ENCODE measurements at regions of chr19 and their contacts with region 1.

Region 1: GRCh38 chr19:11814029-11814699 is at the start of gene ZNF440:
- DNase-seq: peak; percentile 65 to 88 (median 73)
- ATAC-seq: peak; percentile 99
- H3K4me3 ChIP-seq: peak within 1 kb of the TSS; percentile 94
- H3K4me3 Mint-ChIP-seq: peak within 1 kb of the TSS; percentile 85 to 96 (median 92)
- H3K27ac ChIP-seq: peak within 1 kb of the TSS; percentile 66
- H3K27ac Mint-ChIP-seq: peak within 1 kb of the TSS; percentile 72 to 90 (median 81)
- H3K4me1 ChIP-seq: peaks cover 0 to 4% of the 10 kb centered on the region in 2 donors
- H3K4me1 Mint-ChIP-seq: peaks cover 10 to 39% (median 19%) of the 10 kb centered on the region in 7 donors
- H3K27me3 ChIP-seq: no peaks in the 10 kb centered on the region
- H3K27me3 Mint-ChIP-seq: no peaks in the 10 kb centered on the region
- total RNA-seq, gene ZNF440: 10.4 to 19.5 (median 16.0) TPM

Region 2: DNA sequence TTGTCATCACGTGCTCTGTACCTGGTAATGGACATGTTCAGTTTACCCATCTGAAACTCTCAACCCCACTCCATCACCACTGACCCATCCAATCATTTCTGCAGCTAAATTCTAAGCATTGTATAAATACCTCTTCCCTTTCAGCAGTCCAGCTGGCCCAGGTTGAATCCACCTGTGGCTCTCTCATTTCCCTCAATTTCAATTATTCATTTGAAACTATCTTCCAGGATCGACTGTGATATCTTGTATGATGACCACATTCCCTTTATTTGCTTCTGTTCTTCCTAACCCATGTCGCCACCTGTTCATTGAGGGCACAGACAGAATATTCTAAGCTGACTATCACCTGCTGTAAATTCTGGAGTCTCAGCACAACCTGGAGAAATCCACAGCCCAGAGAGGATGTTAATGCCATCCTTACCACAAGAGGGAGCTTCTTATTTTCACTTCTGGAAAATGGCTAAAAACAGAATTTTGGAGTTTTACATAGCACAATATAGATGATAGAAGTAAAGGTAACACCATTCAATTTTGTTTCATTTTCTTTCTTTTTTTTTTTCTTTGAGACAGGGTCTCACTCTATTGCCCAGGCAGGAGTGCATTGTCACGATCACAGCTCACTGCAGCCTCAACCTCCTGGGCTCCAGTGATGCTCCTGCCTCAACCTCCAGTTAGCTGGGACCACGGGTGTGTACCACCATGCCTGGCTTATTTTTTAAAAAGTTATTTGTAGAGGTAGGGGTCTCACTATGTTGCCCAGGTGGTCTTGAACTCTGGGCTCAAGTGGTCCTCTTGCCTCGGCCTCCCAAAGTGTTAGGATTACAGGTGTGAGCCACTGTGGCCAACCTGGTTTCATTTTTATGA is 114.0 kb before region 1 on chr19:
- CTCF ChIA-PET with region 1: interaction called, 3 read pairs
- POLR2A ChIA-PET with region 1: no interaction called
- intact Hi-C with region 1: loop called in 1 of 2 experiments (anchors 1 kb)
- DNase-seq: peak in 6 of 9 donors; percentile 10 to 34 (median 29)
- ATAC-seq: no peak
- H3K4me3 ChIP-seq: no peak overlapping the region
- H3K4me3 Mint-ChIP-seq: no peak overlapping the region
- H3K27ac ChIP-seq: no peak overlapping the region
- H3K27ac Mint-ChIP-seq: no peak overlapping the region
- H3K4me1 ChIP-seq: peaks cover 0 to under 1% of the 10 kb centered on the region in 2 donors
- H3K4me1 Mint-ChIP-seq: peaks cover 0 to 5% (median 4%) of the 10 kb centered on the region in 7 donors
- H3K27me3 ChIP-seq: peaks cover 0 to 2% of the 10 kb centered on the region in 2 donors
- H3K27me3 Mint-ChIP-seq: peaks cover 2 to 13% (median 6%) of the 10 kb centered on the region in 5 donors

Region 3: DNA sequence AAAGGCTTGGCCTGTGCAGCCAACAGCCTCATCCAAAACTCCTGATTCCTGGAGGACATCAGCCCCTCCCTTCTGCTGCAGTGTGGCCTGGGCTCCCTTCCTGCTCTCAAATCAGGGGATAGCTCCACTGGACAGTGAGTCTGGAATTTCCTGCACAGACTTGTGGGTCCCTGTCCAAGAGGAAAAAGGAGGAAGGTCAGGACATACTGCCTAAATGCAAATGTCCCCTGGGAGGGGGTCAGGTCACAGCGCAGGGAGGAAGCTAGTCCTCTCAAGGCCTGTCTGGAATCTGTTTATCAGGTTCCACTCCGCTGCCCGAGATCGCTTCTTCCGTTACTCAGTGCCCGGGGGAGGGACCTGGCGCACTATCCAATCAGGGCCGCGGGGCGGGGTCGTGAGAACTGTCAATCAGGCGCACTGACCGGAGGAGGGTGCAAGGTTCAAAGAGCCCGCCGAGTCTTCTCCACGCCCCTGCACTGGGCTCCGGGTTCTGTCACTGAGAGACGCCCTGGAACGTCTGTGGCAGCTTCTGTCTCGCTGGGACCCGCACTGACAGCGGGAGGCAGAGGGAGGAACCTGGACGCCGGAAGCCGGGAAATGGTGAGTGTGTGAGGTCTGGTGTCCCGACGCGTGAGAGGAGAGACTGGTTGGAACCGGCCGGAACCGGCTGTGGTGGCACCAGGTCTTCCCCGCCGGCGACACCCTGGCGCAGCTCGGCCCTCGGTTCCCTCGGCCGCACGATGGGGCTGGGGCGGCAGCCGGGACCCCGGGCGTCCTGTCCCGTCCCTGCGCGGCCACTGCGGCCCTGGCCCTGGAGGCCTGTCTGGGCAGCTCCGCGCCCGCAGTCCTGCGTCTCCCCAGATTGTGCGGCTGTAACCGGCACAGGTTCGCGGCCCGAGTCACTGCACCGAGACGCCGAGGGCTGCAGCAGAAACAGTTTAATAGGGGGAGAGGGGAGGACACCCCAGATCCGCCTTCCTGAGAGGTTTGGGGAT is 47.3 kb before region 1 on chr19 and contains the start of gene ZNF441:
- CTCF ChIA-PET with region 1: no interaction called
- POLR2A ChIA-PET with region 1: no interaction called
- intact Hi-C with region 1: loop called in 1 of 2 experiments (anchors 2 kb)
- DNase-seq: peak; percentile 76 to 89 (median 87)
- ATAC-seq: peak; percentile 98
- H3K4me3 ChIP-seq: peak within 1 kb of the TSS; percentile 70
- H3K4me3 Mint-ChIP-seq: peak within 1 kb of the TSS; percentile 94 to 99 (median 96)
- H3K27ac ChIP-seq: peak within 1 kb of the TSS; percentile 79
- H3K27ac Mint-ChIP-seq: peak within 1 kb of the TSS; percentile 90 to 98 (median 95)
- H3K4me1 ChIP-seq: peaks cover 4 to 7% of the 10 kb centered on the region in 2 donors
- H3K4me1 Mint-ChIP-seq: peaks cover 15 to 31% (median 27%) of the 10 kb centered on the region in 7 donors
- H3K27me3 ChIP-seq: no peaks in the 10 kb centered on the region
- H3K27me3 Mint-ChIP-seq: peaks cover 0 to 23% (median 5%) of the 10 kb centered on the region in 5 donors
- total RNA-seq, gene ZNF441: 3.9 to 23.8 (median 7.1) TPM

Region 4: GRCh38 chr19:11848594-11849469 is 34.7 kb after region 1 on chr19 and contains the start of gene ZNF439:
- CTCF ChIA-PET with region 1: no interaction called
- POLR2A ChIA-PET with region 1: interaction called, 4 read pairs
- intact Hi-C with region 1: loop called (anchors 1 kb)
- DNase-seq: peak; percentile 74 to 93 (median 86)
- ATAC-seq: peak; percentile 100
- H3K4me3 ChIP-seq: peak within 1 kb of the TSS; percentile 88
- H3K4me3 Mint-ChIP-seq: peak within 1 kb of the TSS; percentile 88 to 93 (median 91)
- H3K27ac ChIP-seq: peak within 1 kb of the TSS; percentile 66
- H3K27ac Mint-ChIP-seq: peak within 1 kb of the TSS; percentile 81 to 96 (median 90)
- H3K4me1 ChIP-seq: peaks cover 0 to 15% of the 10 kb centered on the region in 2 donors
- H3K4me1 Mint-ChIP-seq: peaks cover 13 to 42% (median 24%) of the 10 kb centered on the region in 7 donors
- H3K27me3 ChIP-seq: no peaks in the 10 kb centered on the region
- H3K27me3 Mint-ChIP-seq: no peaks in the 10 kb centered on the region
- total RNA-seq, gene ZNF439: 5.6 to 22.5 (median 14.1) TPM

Region 5: GRCh38 chr19:11987405-11988281 is 173.5 kb after region 1 on chr19:
- CTCF ChIA-PET with region 1: no interaction called
- POLR2A ChIA-PET with region 1: no interaction called
- intact Hi-C with region 1: loop called (anchors 1 kb)
- DNase-seq: peak; percentile 73 to 90 (median 87)
- ATAC-seq: peak; percentile 95
- H3K4me3 ChIP-seq: peak overlapping the region; percentile 98
- H3K4me3 Mint-ChIP-seq: peak overlapping the region; percentile 84 to 99 (median 96)
- H3K27ac ChIP-seq: peak overlapping the region; percentile 88
- H3K27ac Mint-ChIP-seq: peak overlapping the region; percentile 70 to 97 (median 96)
- H3K4me1 ChIP-seq: peaks cover 0 to 8% of the 10 kb centered on the region in 2 donors
- H3K4me1 Mint-ChIP-seq: peaks cover 15 to 39% (median 28%) of the 10 kb centered on the region in 7 donors
- H3K27me3 ChIP-seq: no peaks in the 10 kb centered on the region
- H3K27me3 Mint-ChIP-seq: peaks cover 0 to 2% (median 0%) of the 10 kb centered on the region in 5 donors

Measured in naive thymus-derived CD4-positive, alpha-beta T cell (primary cell).